Activated naive CD4-positive, alpha-beta T cell treated with anti-CD3 and anti-CD28 coated beads for 36 hours (primary cell): ENCODE measurements at regions of chr13 and their contacts with region 1.

Region 1: GRCh38 chr13:27259831-27260230 is 8.5 kb downstream of the RPL21 start:
- DNase-seq: no peak
- H3K4me3 Mint-ChIP-seq: no peak overlapping the region
- H3K27ac Mint-ChIP-seq: peak overlapping the region; percentile 53
- H3K4me1 Mint-ChIP-seq: peaks cover 49% of the 10 kb centered on the region
- H3K27me3 Mint-ChIP-seq: no peaks in the 10 kb centered on the region

Region 2: DNA sequence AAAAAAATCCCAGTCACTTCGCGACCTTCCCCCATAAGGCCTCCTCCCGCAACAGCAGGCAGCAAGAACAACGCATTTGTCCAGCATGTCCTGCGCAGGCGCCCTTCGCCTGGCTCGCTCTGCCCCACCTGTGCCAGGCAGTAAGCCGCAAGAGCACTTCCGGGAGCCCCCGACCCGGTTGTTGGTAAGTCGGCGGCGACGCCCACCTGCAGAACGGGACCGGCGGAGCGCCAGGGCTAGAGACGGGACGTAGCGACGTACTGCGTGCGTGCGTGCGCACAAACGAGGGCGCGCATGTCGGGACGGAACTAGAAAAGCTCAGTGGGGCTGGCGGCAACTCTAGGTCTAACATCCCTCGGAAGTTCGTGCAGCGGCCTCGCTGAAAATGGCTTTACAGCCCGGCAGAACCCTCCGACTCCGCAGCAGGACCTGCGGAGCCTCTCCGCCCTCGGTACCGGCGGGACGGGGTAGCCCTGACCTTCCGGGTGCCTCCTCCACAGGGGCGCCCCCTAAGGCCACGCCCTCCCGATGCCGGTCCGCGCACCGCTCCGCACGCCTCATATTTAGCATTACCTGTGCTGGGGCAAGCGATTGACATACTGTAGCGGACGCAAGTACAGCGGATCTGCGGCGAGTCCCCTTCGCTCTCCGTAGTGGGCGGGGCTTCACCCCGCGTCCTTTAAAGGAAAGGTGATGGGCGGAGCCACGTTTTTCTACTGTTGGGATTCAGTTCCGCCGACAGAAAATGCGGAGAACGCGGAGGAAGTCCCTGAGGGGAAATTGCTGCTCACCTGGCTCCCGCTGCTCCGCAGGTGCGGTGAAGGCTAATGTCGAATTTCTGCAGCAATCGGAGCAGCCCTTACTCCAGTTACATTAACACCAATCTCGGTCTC is 190.4 kb after region 1 on chr13 and contains the start of gene MTIF3:
- CTCF ChIA-PET with region 1: no interaction called
- intact Hi-C with region 1: loop called (anchors 1 kb)
- DNase-seq: peak; percentile 97
- H3K4me3 Mint-ChIP-seq: peak within 1 kb of the TSS; percentile 94
- H3K27ac Mint-ChIP-seq: peak within 1 kb of the TSS; percentile 99
- H3K4me1 Mint-ChIP-seq: peaks cover 55% of the 10 kb centered on the region
- H3K27me3 Mint-ChIP-seq: no peaks in the 10 kb centered on the region
- total RNA-seq, gene MTIF3: 34.0 to 42.1 TPM